ENCODE measurements at regions of chr19 and their contacts with region 1.

Region 1: GRCh38 chr19:15280915-15281683 is 48.9 kb upstream of the EPHX3 start:
- DNase-seq: peak; percentile 87

Region 2: GRCh38 chr19:15264061-15264932 is 16.8 kb before region 1 on chr19:
- intact Hi-C with region 1: loop called (anchors 2 kb)
- DNase-seq: peak; percentile 87

Region 3: GRCh38 chr19:15297416-15298224 is 16.5 kb after region 1 on chr19:
- intact Hi-C with region 1: loop called (anchors 2 kb)
- DNase-seq: no peak

Region 4: DNA sequence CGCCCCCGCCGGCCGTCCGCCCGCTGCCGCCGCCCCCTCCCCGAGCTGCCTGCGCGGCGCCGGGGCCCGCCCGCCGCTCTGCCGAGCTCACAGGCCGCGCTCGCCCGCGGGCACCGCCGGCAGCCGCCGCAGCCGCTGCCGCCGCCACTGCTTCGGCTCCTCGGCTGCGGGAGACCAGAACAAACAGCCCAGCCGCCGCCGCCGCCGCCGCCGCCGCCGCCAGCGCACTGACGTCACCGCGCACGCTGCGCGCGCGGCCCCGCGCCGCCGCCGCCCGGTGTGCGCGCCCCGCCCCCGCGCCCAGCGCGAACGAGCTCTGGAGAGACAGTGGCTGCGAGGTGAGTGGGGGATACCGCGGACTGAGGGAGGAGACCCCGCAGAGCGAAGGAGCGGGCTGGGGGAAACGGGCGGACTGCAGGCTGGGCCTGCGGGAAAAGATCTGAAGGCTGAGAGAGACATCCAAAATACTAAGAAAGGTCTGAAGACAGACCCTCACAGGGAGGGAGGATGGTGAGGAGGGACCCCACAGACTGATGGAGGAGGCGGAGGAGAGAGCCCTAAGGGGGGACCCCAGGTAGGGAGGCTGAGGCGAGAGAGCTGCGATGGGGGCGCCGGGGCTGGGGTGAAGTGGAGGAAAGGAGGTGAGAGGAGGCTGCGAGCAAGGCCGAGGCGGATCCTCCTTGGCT is 51.4 kb after region 1 on chr19 and contains the start of gene BRD4:
- intact Hi-C with region 1: loop called (anchors 5 kb)
- DNase-seq: peak; percentile 83
- total RNA-seq, gene BRD4: 72.3 TPM

Region 5: DNA sequence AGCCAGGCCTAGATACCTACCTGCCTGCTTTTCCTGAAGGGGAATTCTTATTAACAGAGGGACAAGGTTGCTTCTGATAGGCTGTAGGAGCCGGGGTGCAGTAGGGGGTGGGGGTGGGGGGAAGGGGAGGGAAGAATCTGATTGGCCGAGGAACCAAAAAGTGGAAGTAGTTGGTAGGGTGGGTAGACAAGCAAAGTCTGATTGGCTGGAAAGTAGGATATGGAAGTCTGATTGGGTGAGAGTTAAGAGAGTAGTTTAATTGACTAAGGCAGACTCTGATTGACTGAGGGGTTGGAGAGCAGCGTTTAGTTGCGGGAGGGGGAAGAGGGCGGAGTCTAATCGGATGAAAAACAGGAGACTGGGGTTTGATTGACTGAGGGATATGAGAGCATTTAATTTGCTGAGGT is 217.8 kb after region 1 on chr19:
- intact Hi-C with region 1: no loop called
- DNase-seq: no peak